Panc1 (cell line): ENCODE measurements at regions of chr1 and their contacts with region 1.

Region 1: DNA sequence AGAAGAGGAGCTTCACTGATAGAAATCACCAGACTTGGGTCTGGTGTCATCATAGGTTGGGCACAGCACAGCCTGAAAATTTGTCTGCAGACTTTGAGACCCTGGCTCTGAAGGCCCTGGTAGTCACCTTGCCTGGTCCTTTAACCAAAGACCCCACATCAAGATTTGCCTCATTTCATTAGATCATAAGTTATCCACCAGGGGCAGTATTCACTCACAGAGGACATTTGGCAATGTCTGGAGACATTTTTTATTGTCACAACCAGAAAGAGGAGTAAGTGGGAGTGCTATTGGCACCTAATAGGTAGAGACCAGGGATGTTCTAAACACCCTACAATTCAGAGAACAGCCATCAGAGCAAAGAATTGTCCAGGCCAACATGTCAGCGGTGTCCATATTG is 22.1 kb upstream of the PAX7 start:
- DNase-seq: no peak
- ATAC-seq: no peak
- H3K4me3 ChIP-seq: no peak overlapping the region
- H3K27ac ChIP-seq: no peak overlapping the region
- H3K4me1 ChIP-seq: no peaks in the 10 kb centered on the region
- H3K27me3 ChIP-seq: peaks cover 4% of the 10 kb centered on the region; the same call in 1 of the 2 replicates
- CTCF ChIP-seq: no peak; the same call in 1 of the 2 replicates

Region 2: GRCh38 chr1:17849216-17849615 is 759.3 kb before region 1 on chr1:
- CTCF ChIA-PET with region 1: no interaction called
- POLR2A ChIA-PET with region 1: interaction called, 18 read pairs
- in situ Hi-C with region 1: no loop called
- intact Hi-C with region 1: no loop called
- DNase-seq: no peak
- ATAC-seq: no peak
- H3K4me3 ChIP-seq: no peak overlapping the region
- H3K27ac ChIP-seq: no peak overlapping the region
- H3K4me1 ChIP-seq: no peaks in the 10 kb centered on the region
- H3K27me3 ChIP-seq: no peaks in the 10 kb centered on the region; the same call in 1 of the 2 replicates
- CTCF ChIP-seq: no peak

Region 3: GRCh38 chr1:18575620-18576019 is 32.9 kb before region 1 on chr1:
- CTCF ChIA-PET with region 1: no interaction called
- POLR2A ChIA-PET with region 1: no interaction called
- in situ Hi-C with region 1: no loop called
- intact Hi-C with region 1: no loop called
- DNase-seq: no peak
- ATAC-seq: peak; percentile 67
- H3K4me3 ChIP-seq: no peak overlapping the region
- H3K27ac ChIP-seq: no peak overlapping the region
- H3K4me1 ChIP-seq: no peaks in the 10 kb centered on the region; the same call in 1 of the 2 replicates
- H3K27me3 ChIP-seq: no peaks in the 10 kb centered on the region; the same call in 1 of the 2 replicates
- CTCF ChIP-seq: peak; percentile 75

Region 4: DNA sequence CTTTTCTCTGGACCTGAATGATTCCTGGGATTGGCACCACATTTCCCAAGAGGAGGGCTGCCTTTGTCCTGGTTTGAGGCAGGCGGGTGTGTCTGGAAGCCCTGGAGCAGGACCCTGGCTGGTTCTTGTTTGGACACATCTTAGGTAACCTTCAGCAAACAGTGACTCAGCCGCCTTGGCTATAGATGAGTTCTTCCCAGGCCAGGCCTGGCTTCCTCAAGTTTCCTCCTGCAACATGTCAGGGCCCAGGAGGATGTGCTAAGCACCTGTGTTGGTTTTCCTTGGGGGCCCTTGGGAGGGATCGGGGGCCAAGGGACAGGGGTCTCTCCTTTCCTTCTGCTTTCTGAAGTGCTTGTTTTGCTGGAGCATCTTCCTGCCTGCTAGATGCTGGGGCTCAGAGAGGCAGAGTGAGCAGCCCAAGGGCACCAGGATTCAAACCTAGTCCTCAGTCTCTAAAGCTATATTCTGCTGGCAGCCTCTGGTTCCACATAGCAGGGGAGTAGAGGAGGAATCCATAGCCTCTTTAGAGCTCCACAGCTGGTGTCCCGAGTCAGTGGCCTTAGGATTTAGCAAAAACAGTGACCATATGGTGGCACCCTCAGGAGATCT is 60.4 kb after region 1 on chr1:
- CTCF ChIA-PET with region 1: no interaction called
- POLR2A ChIA-PET with region 1: no interaction called
- in situ Hi-C with region 1: no loop called
- intact Hi-C with region 1: no loop called
- DNase-seq: peak; percentile 32
- ATAC-seq: peak; percentile 89
- H3K4me3 ChIP-seq: no peak overlapping the region
- H3K27ac ChIP-seq: no peak overlapping the region
- H3K4me1 ChIP-seq: peaks cover 21% of the 10 kb centered on the region
- H3K27me3 ChIP-seq: peaks cover 2% of the 10 kb centered on the region; the same call in 1 of the 2 replicates
- CTCF ChIP-seq: no peak